B cell (primary cell): ENCODE measurements at regions of chr20 and their contacts with region 1.

Region 1: DNA sequence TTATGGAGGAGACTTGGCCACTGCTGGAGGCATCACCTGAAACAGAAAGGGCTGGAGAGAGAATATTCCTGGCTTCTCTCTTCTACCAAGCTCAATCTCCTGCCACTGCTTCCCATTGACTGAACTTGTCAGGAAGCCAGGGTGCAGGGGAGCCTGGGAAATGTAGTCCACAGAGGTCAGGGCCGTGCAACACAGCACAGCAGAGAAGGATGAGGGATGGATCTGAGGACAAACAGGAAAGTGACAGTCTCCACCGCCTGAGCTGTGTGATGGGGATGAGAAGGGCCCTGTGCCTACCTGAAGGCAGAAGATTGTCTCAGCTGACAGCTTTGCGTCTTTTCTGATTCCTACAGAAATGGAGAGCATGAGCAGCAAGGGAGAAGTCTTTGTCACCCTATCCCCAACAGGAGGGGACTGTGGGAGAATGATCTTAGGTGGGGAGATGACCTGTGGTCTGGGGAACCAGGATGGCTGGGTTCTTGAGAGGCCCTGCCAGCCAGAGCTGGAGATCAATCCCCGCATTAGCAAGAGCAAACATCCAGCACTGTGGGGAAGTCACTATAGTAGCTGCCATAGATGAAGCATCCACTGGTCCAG is 114.2 kb downstream of the SNX5 start:
- DNase-seq: no peak
- ATAC-seq: no peak
- H3K4me3 ChIP-seq: no peak overlapping the region
- H3K4me3 Mint-ChIP-seq: no peak overlapping the region
- H3K27ac ChIP-seq: no peak overlapping the region
- H3K27ac Mint-ChIP-seq: peak overlapping the region; percentile 18
- H3K4me1 ChIP-seq: peaks cover 50 to 63% of the 10 kb centered on the region in 2 donors
- H3K4me1 Mint-ChIP-seq: peaks cover 67% of the 10 kb centered on the region
- H3K27me3 ChIP-seq: no peaks in the 10 kb centered on the region
- H3K27me3 Mint-ChIP-seq: no peaks in the 10 kb centered on the region
- CTCF ChIP-seq: no peak

Region 2: DNA sequence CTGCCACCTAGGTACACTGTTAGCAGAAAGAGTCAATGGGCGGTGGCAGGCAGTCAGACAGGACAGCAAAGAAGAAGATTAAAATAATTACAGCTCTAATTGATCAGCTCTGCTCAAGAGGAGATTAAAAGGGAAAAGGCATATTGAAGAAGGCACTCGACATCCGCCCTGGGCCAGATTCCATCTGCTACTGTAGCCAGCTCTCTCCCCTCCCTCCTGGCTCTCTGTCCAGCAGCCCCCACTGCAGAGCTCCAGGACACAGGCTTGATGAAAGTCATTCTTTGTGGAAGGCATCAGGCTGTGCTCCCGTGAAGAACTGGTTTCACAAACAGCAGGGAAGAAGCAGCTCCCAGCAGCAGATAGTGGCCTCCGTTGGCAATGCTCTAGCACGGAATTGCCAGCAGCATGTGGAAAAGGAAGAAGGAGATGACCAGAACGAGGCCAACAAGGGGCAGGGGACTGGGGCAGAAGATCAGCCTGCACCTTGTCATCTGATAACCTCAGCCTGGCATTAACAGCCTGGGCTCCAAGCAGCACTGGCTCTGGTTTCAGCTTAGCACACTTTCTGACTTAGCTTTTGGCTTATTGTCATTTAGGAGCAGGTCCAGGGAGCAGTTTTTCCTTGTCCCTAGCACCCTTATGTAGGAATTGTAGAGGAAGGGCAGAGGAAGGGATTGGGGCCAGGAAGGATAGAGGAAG is 1747.1 kb before region 1 on chr20:
- CTCF ChIA-PET with region 1: no interaction called
- POLR2A ChIA-PET with region 1: interaction called, 15 read pairs
- intact Hi-C with region 1: no loop called
- DNase-seq: no peak
- ATAC-seq: no peak
- H3K4me3 ChIP-seq: no peak overlapping the region
- H3K4me3 Mint-ChIP-seq: no peak overlapping the region
- H3K27ac ChIP-seq: no peak overlapping the region
- H3K27ac Mint-ChIP-seq: no peak overlapping the region
- H3K4me1 ChIP-seq: peaks cover 31% of the 10 kb centered on the region in 2 donors
- H3K4me1 Mint-ChIP-seq: peaks cover 52% of the 10 kb centered on the region
- H3K27me3 ChIP-seq: no peaks in the 10 kb centered on the region
- H3K27me3 Mint-ChIP-seq: no peaks in the 10 kb centered on the region
- CTCF ChIP-seq: no peak

Region 3: GRCh38 chr20:17878912-17879602 is 24.7 kb after region 1 on chr20:
- CTCF ChIA-PET with region 1: interaction called, 7 read pairs
- POLR2A ChIA-PET with region 1: no interaction called
- intact Hi-C with region 1: loop called (anchors 2 kb)
- DNase-seq: peak; percentile 69
- ATAC-seq: peak; percentile 74
- H3K4me3 ChIP-seq: peak overlapping the region in 2 of 5 experiments; percentile 9 to 12
- H3K4me3 Mint-ChIP-seq: peak overlapping the region; percentile 71
- H3K27ac ChIP-seq: peak overlapping the region; percentile 64 to 71
- H3K27ac Mint-ChIP-seq: peak overlapping the region; percentile 82
- H3K4me1 ChIP-seq: peaks cover 58 to 65% of the 10 kb centered on the region in 2 donors
- H3K4me1 Mint-ChIP-seq: peaks cover 56% of the 10 kb centered on the region
- H3K27me3 ChIP-seq: no peaks in the 10 kb centered on the region
- H3K27me3 Mint-ChIP-seq: no peaks in the 10 kb centered on the region
- CTCF ChIP-seq: peak; percentile 65